ENCODE measurements at regions of chr12 and their contacts with region 1.

Region 1: GRCh38 chr12:53675651-53676453 is at the start of gene ATP5MC2:
- DNase-seq: peak; percentile 95 to 100 (median 96)
- ATAC-seq: peak; percentile 92
- H3K4me3 ChIP-seq: peak within 1 kb of the TSS; percentile 78
- H3K4me3 Mint-ChIP-seq: peak within 1 kb of the TSS; percentile 93
- H3K27ac ChIP-seq: peak within 1 kb of the TSS; percentile 58 to 66
- H3K27ac Mint-ChIP-seq: peak within 1 kb of the TSS; percentile 90
- H3K4me1 ChIP-seq: peaks cover 31% of the 10 kb centered on the region
- H3K4me1 Mint-ChIP-seq: peaks cover 32% of the 10 kb centered on the region
- H3K27me3 ChIP-seq: peaks cover 10 to 18% of the 10 kb centered on the region in 2 experiments
- H3K27me3 Mint-ChIP-seq: peaks cover 17% of the 10 kb centered on the region
- CTCF ChIP-seq: peak; percentile 99
- total RNA-seq, gene ATP5MC2: 235 to 245 TPM

Region 2: DNA sequence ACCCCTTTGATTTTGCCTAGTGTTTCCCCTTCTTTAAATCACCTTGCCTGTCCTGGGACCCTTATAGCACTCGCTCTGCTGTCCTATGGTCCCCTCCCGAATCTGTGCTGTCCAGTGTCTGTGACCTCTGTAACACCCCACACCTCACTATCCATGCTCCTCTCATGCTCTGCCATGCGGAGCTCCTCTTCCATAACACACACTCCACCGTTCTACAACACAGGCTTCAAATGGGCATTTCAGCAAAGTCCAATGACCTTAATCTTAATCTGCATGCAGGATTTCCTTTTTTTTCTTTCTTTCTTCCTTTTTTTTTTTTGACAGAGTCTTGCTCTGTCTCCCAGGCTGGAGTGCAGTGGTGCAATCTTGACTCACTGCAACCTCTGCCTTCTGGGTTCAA is 546.7 kb before region 1 on chr12:
- CTCF ChIA-PET with region 1: no interaction called
- POLR2A ChIA-PET with region 1: no interaction called
- intact Hi-C with region 1: no loop called
- DNase-seq: no peak
- ATAC-seq: no peak
- H3K4me3 ChIP-seq: no peak overlapping the region
- H3K4me3 Mint-ChIP-seq: no peak overlapping the region
- H3K27ac ChIP-seq: no peak overlapping the region
- H3K27ac Mint-ChIP-seq: no peak overlapping the region
- H3K4me1 ChIP-seq: no peaks in the 10 kb centered on the region
- H3K4me1 Mint-ChIP-seq: no peaks in the 10 kb centered on the region
- H3K27me3 ChIP-seq: no peaks in the 10 kb centered on the region
- H3K27me3 Mint-ChIP-seq: peaks cover 9% of the 10 kb centered on the region
- CTCF ChIP-seq: no peak

Region 3: DNA sequence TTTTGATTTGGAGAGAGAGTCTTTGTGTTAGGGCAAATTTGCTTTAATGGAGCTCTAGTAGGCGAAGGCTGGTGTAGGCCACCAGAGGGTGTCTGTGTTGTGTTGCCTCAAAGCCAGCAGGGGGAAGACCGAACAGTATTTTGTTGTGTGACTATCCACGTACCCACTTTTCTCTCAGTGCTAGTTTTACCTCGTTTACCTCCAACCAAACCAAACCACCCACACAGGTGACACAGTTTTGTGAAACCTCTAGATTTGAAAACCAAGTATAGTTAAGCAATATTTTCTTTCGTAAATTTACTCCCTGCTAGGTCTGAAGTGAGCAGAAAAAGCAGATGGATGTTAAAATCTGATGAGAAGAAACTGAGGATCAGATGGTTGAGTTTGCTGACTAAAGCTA is 132.3 kb before region 1 on chr12:
- CTCF ChIA-PET with region 1: interaction called, 25 read pairs
- POLR2A ChIA-PET with region 1: interaction called, 26 read pairs
- intact Hi-C with region 1: loop called (anchors 1 kb)
- DNase-seq: peak; percentile 12 to 77 (median 40)
- ATAC-seq: peak; percentile 98
- H3K4me3 ChIP-seq: no peak overlapping the region
- H3K4me3 Mint-ChIP-seq: no peak overlapping the region
- H3K27ac ChIP-seq: no peak overlapping the region
- H3K27ac Mint-ChIP-seq: peak overlapping the region; percentile 68
- H3K4me1 ChIP-seq: peaks cover 3% of the 10 kb centered on the region
- H3K4me1 Mint-ChIP-seq: peaks cover 19% of the 10 kb centered on the region
- H3K27me3 ChIP-seq: no peaks in the 10 kb centered on the region
- H3K27me3 Mint-ChIP-seq: no peaks in the 10 kb centered on the region
- CTCF ChIP-seq: peak; percentile 76

Region 4: GRCh38 chr12:53599579-53599978 is 76.3 kb before region 1 on chr12:
- CTCF ChIA-PET with region 1: interaction called, 5 read pairs
- POLR2A ChIA-PET with region 1: no interaction called
- intact Hi-C with region 1: loop called in 1 of 2 experiments (anchors 1 kb)
- DNase-seq: no peak
- ATAC-seq: no peak
- H3K4me3 ChIP-seq: no peak overlapping the region
- H3K4me3 Mint-ChIP-seq: no peak overlapping the region
- H3K27ac ChIP-seq: no peak overlapping the region
- H3K27ac Mint-ChIP-seq: no peak overlapping the region
- H3K4me1 ChIP-seq: no peaks in the 10 kb centered on the region
- H3K4me1 Mint-ChIP-seq: peaks cover 39% of the 10 kb centered on the region
- H3K27me3 ChIP-seq: no peaks in the 10 kb centered on the region
- H3K27me3 Mint-ChIP-seq: no peaks in the 10 kb centered on the region
- CTCF ChIP-seq: no peak

Region 5: DNA sequence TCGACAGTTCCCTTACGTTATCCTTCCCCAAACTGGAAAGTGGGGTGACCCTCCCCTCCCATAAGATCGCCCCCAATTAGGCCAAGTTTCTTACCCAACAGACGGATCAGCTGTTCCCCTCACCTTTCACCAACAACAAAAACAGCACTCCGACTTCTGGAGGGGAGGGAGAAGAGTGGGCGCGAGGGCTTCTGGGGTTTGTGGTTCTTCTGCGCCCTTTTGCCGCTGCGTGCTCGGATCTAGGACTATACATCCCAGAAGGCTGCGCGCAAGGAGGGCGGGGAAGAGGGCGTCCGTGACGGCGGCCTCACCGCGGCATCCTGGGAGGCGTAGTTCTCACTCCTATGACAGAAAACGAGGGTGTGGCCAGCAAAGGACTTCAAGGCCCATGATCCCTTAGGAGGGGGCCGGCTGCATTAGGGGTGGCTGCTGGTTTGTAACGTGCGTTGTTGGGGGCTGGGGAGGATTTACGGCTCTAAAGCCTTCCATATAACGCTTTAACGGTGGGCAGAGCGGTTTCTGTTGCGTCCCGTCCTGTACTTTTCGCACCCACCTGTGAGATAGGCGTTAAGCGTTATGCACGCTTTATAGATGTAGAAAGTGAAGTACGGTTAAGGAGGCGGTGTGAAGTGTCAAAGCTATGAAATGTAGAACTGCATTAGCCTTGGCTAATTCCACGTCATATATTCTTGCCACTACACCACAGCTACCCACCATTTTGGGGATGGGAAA is 51.6 kb after region 1 on chr12 and contains the start of gene CALCOCO1:
- CTCF ChIA-PET with region 1: interaction called, 8 read pairs
- POLR2A ChIA-PET with region 1: interaction called, 3 read pairs
- intact Hi-C with region 1: loop called in 1 of 2 experiments (anchors 1 kb)
- DNase-seq: peak; percentile 89 to 99 (median 96)
- ATAC-seq: peak; percentile 98
- H3K4me3 ChIP-seq: peak within 1 kb of the TSS; percentile 73
- H3K4me3 Mint-ChIP-seq: peak within 1 kb of the TSS; percentile 92
- H3K27ac ChIP-seq: peak within 1 kb of the TSS; percentile 42 to 52
- H3K27ac Mint-ChIP-seq: peak within 1 kb of the TSS; percentile 82
- H3K4me1 ChIP-seq: peaks cover 27% of the 10 kb centered on the region
- H3K4me1 Mint-ChIP-seq: peaks cover 34% of the 10 kb centered on the region
- H3K27me3 ChIP-seq: no peaks in the 10 kb centered on the region
- H3K27me3 Mint-ChIP-seq: no peaks in the 10 kb centered on the region
- CTCF ChIP-seq: no peak
- total RNA-seq, gene CALCOCO1: 66.8 to 69.3 TPM

Region 6: GRCh38 chr12:53820516-53821306 is 144.9 kb after region 1 on chr12:
- CTCF ChIA-PET with region 1: no interaction called
- POLR2A ChIA-PET with region 1: no interaction called
- intact Hi-C with region 1: no loop called
- DNase-seq: no peak
- ATAC-seq: no peak
- H3K4me3 ChIP-seq: no peak overlapping the region
- H3K4me3 Mint-ChIP-seq: no peak overlapping the region
- H3K27ac ChIP-seq: no peak overlapping the region
- H3K27ac Mint-ChIP-seq: no peak overlapping the region
- H3K4me1 ChIP-seq: no peaks in the 10 kb centered on the region
- H3K4me1 Mint-ChIP-seq: no peaks in the 10 kb centered on the region
- H3K27me3 ChIP-seq: peaks cover 37 to 63% of the 10 kb centered on the region in 2 experiments
- H3K27me3 Mint-ChIP-seq: peaks cover 89% of the 10 kb centered on the region
- CTCF ChIP-seq: no peak

Measured in CD4-positive, alpha-beta T cell (primary cell).